HepG2 (cell line): ENCODE measurements at regions of chr14 and their contacts with region 1.

Region 1: GRCh38 chr14:22829661-22830442 is at the start of gene MRPL52:
- DNase-seq: peak; percentile 97
- ATAC-seq: peak; percentile 94
- H3K4me3 ChIP-seq: peak within 1 kb of the TSS; percentile 74 to 97 (median 88)
- H3K27ac ChIP-seq: peak within 1 kb of the TSS; percentile 65
- H3K4me1 ChIP-seq: peaks cover 24% of the 10 kb centered on the region
- H3K27me3 ChIP-seq: no peaks in the 10 kb centered on the region; a peak in 1 of 5 replicates
- CTCF ChIP-seq: peak; percentile 37
- EP300 ChIP-seq: peak in 1 of 2 experiments; percentile 69; a peak in 1 of 4 replicates
- POLR2A ChIP-seq: peak; percentile 91 to 97
- RAD21 ChIP-seq: peak; percentile 53; the same call in 1 of the 2 replicates
- total RNA-seq, gene MRPL52: 329 and 420 TPM in 2 replicates

Region 2: GRCh38 chr14:22715186-22715812 is 114.6 kb before region 1 on chr14:
- CTCF ChIA-PET with region 1: no interaction called
- POLR2A ChIA-PET with region 1: no interaction called
- in situ Hi-C with region 1: no loop called
- intact Hi-C with region 1: no loop called
- DNase-seq: no peak
- ATAC-seq: no peak; the same call in 2 of the 3 replicates
- H3K4me3 ChIP-seq: no peak overlapping the region
- H3K27ac ChIP-seq: no peak overlapping the region
- H3K4me1 ChIP-seq: peaks cover 13% of the 10 kb centered on the region
- H3K27me3 ChIP-seq: peaks cover 0 to 13% of the 10 kb centered on the region in 2 experiments; a peak in 1 of 5 replicates
- CTCF ChIP-seq: no peak
- EP300 ChIP-seq: no peak
- POLR2A ChIP-seq: no peak
- RAD21 ChIP-seq: no peak

Region 3: GRCh38 chr14:22773162-22774010 is 56.5 kb before region 1 on chr14:
- CTCF ChIA-PET with region 1: no interaction called
- POLR2A ChIA-PET with region 1: interaction called, 6 read pairs
- in situ Hi-C with region 1: no loop called
- intact Hi-C with region 1: loop called (anchors 2 kb)
- DNase-seq: no peak
- ATAC-seq: no peak
- H3K4me3 ChIP-seq: no peak overlapping the region
- H3K27ac ChIP-seq: no peak overlapping the region
- H3K4me1 ChIP-seq: peaks cover 14% of the 10 kb centered on the region
- H3K27me3 ChIP-seq: no peaks in the 10 kb centered on the region
- CTCF ChIP-seq: no peak
- EP300 ChIP-seq: no peak
- POLR2A ChIP-seq: no peak
- RAD21 ChIP-seq: no peak

Region 4: DNA sequence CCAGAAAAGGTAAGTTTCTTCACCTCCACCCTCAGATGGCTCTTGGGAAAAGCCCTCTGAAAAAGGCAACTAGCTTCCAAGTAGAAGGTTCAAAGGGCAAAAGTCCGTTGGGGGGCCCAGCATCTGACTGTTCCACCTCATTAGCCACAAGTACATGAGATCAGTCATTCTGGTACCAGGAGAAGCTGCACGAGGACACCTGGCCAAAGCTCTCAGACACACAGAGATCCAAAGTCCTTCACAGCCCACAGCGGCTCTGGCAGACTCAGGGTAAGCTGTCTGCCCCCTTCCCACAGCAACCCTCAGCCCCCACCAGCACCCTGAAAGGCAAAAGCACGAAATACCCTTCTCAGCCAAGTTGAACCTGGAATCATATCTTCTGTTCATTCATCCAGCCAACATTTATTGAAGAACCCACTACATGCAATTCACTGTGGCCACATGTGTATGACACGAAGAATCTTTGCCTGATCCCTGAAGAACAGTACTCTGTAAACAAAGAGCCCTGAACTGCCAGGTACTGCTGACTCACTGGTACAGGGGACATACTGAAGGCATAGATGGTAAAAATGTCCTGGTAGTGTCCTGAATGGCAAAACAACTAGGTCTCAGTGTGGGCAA is 33.7 kb before region 1 on chr14:
- CTCF ChIA-PET with region 1: no interaction called
- POLR2A ChIA-PET with region 1: interaction called, 10 read pairs
- in situ Hi-C with region 1: no loop called
- intact Hi-C with region 1: no loop called
- DNase-seq: peak; percentile 60
- ATAC-seq: peak; percentile 63
- H3K4me3 ChIP-seq: peak overlapping the region in 1 of 3 experiments; percentile 19; a peak in 2 of 6 replicates
- H3K27ac ChIP-seq: no peak overlapping the region
- H3K4me1 ChIP-seq: peaks cover 34% of the 10 kb centered on the region
- H3K27me3 ChIP-seq: no peaks in the 10 kb centered on the region
- CTCF ChIP-seq: no peak
- EP300 ChIP-seq: peak in 1 of 2 experiments; percentile 32; a peak in 1 of 4 replicates
- POLR2A ChIP-seq: no peak
- RAD21 ChIP-seq: no peak